ENCODE measurements at regions of chr11 and their contacts with region 1.

Region 1: DNA sequence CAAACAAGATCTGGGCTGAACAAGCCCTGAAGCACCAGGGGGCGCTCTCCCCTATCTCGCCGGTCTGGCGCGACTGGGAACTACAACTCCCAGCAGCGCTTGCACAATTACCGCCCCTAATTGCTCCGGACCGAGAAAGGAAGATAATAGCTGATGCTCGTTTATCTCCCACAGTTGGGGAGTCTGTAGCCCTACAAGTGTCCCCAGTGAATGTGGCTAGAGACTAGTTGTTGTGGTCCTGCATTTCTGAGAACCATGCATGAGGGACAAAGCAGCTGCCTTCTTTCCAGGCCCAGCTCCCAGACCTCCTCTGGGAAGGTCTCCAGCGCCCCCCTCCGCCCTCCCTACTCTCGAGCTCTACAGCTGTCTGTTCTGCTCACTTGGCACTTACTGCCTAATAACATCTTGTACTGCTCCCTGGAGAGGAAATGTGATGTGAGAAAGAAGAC is 34.4 kb downstream of the NRXN2 start:
- DNase-seq: peak; percentile 88 to 94 (median 91)
- ATAC-seq: peak; percentile 99
- H3K4me3 ChIP-seq: peak overlapping the region; percentile 35
- H3K27ac ChIP-seq: no peak overlapping the region
- H3K4me1 ChIP-seq: peaks cover 0 to 6% of the 10 kb centered on the region in 2 experiments; a peak in 2 of 5 replicates
- H3K27me3 ChIP-seq: peaks cover 21 to 62% of the 10 kb centered on the region in 2 experiments
- CTCF ChIP-seq: peak; percentile 94 to 97 (median 97)
- EP300 ChIP-seq: peak; percentile 39; the same call in 1 of the 2 replicates
- POLR2A ChIP-seq: no peak
- RAD21 ChIP-seq: peak; percentile 81 to 82

Region 2: DNA sequence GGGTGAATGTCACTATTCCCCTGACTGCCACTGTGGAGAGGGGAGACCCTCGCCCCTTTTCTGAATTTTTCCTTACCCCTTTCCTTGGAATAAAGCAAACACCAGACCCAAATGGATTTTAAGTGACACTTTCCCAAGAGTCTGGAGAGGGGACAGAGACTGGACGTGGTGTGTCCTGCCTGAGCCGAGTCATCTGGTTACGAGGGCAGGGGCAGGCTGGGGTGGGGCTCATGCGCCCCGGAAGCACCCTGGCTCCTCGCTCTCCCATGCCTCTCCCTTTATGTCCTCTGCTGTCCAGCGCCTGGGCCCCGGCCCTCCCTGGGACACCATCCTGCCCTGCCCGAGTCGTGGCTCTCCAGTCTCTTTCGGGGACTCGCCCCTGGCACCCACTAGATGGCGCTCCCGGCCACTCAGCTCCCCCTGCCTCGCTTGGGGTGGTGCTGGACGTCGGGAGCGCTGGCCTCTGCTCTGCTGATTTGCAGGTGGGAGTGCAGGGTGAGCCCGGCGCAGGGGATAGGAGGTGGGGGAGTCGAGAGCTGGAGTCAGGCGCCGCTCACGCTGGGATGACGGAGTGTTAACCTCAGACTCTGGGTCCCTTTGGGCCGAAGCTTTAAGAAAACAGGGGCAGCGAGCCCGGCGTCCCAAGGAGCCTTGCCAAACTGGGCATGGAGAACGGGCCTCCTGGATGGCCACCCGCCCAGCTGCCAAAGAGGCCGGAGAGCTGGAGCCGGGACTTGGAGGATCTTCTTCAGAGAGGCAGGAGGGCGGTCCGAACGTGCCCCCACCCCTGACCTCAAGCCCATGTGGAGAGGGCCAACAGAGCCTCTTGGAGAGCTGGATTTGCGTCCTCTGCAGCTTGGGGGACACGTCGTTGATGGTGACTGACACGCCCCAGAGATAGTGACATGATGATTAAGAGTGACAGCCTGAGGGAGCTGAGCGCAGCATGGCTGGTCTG is 239.7 kb before region 1 on chr11:
- CTCF ChIA-PET with region 1: no interaction called
- POLR2A ChIA-PET with region 1: no interaction called
- in situ Hi-C with region 1: no loop called
- intact Hi-C with region 1: loop called (anchors 1 kb)
- DNase-seq: peak; percentile 85 to 89 (median 88)
- ATAC-seq: peak; percentile 98
- H3K4me3 ChIP-seq: peak overlapping the region; percentile 8; the same call in 1 of the 2 replicates
- H3K27ac ChIP-seq: no peak overlapping the region
- H3K4me1 ChIP-seq: peaks cover 11 to 17% of the 10 kb centered on the region in 2 experiments
- H3K27me3 ChIP-seq: peaks cover 5 to 44% of the 10 kb centered on the region in 2 experiments; a peak in 4 of 5 replicates
- CTCF ChIP-seq: peak; percentile 87 to 93 (median 91)
- EP300 ChIP-seq: no peak
- POLR2A ChIP-seq: no peak
- RAD21 ChIP-seq: peak; percentile 62 to 83; a peak in 3 of 4 replicates

Region 3: DNA sequence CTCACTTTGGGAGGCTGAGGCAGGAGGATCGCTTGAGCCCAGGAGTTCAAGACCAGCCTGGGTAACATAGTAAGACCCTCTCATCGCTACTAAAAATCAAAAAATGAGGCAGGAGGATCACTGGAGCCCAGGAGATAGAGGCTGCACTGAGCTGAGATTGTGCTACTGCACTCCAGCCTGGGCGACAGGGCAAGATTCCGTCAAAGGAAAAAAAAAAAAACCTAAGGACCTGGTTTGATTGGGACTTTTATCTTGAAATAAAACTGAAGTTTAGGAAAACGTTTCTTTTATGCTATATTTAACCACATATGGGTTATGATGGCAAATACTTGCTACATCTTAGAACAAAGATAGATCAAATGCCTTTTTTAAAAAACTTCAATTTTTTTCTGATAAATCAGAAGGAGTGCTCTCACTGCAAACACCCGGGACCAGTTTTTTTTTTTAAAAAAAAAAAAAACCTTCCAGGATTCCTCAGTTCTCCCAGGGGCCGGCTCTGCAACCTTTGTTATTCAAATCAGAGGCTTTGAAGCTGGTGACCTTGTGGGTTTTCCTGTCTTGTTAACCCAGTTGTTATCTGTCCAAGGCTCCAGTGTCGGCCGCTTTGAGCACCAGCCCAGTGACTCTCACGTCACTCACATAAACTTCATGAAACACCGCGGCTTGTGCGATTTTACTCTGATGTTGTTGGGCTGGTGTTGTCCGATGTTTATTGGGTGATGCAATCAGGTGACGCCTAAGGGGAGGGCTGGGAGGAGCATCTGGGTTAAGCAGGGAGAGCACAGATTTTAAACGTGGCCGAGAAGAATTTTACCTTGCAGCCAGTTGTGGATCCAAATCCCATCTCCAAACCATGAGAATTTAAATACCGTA is 122.3 kb before region 1 on chr11:
- CTCF ChIA-PET with region 1: interaction called, 10 read pairs
- POLR2A ChIA-PET with region 1: interaction called, 3 read pairs
- in situ Hi-C with region 1: no loop called
- intact Hi-C with region 1: no loop called
- DNase-seq: peak; percentile 66 to 77 (median 68)
- ATAC-seq: peak; percentile 93
- H3K4me3 ChIP-seq: no peak overlapping the region
- H3K27ac ChIP-seq: no peak overlapping the region
- H3K4me1 ChIP-seq: peaks cover 2 to 40% of the 10 kb centered on the region in 2 experiments
- H3K27me3 ChIP-seq: peaks cover 9 to 46% of the 10 kb centered on the region in 2 experiments; a peak in 3 of 5 replicates
- CTCF ChIP-seq: no peak
- EP300 ChIP-seq: peak; percentile 28; the same call in 1 of the 2 replicates
- POLR2A ChIP-seq: no peak
- RAD21 ChIP-seq: 0 out of 4 replicates have a peak, but pooled peaks of 1 of the 2 experiments have one; percentile 7

Region 4: DNA sequence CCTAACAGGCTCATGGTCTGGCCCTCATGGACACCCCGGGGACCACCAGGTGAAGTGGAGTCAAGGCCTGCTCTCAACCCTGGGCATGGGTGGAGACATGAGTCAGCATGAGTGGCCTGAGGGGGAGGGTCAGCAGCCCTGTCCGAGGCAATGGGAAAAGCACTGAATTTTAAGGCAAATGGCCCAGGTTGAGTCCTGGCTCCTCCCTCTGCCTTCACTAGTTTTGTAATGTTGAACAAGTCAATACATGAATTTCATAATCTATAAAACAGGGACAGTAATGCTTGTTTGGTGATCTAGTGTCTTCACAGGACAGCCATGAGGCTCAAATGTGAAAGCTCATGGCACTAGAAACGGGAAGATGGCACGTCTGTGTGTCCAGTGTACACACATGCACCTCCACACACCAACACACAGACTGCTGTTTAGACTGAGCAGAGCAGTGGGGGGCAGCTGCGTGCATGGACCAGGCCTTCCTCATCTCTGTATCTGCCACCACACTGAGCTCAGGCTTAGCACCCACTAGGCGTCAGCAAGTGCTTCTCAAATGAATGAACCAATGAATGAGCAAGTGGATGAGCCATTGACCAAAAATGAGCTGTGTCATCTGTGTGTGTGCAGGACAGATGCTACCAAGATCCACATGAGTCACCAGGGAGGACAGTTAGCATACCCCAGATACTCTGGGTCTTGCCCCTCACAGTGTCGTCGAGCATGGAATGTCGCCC is 29.0 kb before region 1 on chr11:
- CTCF ChIA-PET with region 1: no interaction called
- POLR2A ChIA-PET with region 1: interaction called, 4 read pairs
- in situ Hi-C with region 1: no loop called
- intact Hi-C with region 1: loop called (anchors 1 kb)
- DNase-seq: peak; percentile 73 to 87 (median 79)
- ATAC-seq: peak; percentile 88
- H3K4me3 ChIP-seq: no peak overlapping the region
- H3K27ac ChIP-seq: peak overlapping the region; percentile 82
- H3K4me1 ChIP-seq: peaks cover 38 to 42% of the 10 kb centered on the region in 2 experiments
- H3K27me3 ChIP-seq: no peaks in the 10 kb centered on the region
- CTCF ChIP-seq: peak in 2 of 3 experiments; percentile 37 to 54; a peak in 3 of 6 replicates
- EP300 ChIP-seq: peak; percentile 79
- POLR2A ChIP-seq: peak; percentile 60; the same call in 1 of the 2 replicates
- RAD21 ChIP-seq: peak; percentile 20 to 61; a peak in 3 of 4 replicates

Region 5: DNA sequence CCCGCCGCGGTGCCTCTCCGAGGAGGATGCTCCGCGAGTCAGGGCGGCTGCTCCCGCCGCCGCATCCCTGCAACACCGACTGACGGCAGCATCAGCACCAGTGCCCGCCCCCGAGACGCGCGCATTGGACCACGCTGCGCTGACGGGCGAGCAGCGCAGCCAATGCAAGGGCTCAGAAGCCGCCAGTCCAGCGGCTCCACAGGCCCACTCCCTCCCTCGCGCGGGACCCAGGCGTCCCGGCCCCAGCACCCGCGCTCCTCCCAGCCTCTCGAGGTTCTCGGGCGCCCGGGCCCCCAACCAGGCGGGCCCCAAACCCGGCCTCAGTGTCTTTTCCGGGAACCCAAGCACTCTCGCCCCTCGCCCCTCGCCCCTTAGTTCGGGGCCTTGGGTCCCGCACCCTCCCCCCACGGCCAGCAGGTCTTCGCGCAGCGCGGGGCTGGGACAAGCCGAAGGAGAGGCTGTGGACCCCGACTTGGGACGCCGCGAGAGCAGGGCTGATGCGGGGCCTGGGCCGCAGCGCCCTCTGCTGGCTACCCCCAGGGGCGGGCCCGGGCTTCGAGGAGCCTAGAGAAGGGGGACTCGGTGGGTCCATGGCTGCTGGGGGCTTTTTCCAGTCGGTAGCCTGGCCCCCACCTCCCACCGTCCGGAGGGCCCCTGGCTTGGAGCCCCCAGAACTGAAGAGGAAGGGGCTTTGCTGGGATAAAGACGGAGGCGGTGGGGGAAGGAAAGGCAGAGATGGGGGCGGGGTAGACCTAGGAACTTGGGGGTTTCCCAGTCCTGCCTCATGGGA is 34.8 kb after region 1 on chr11 and contains the start of gene NRXN2:
- CTCF ChIA-PET with region 1: interaction called, 4 read pairs
- POLR2A ChIA-PET with region 1: interaction called, 3 read pairs
- in situ Hi-C with region 1: no loop called
- intact Hi-C with region 1: loop called (anchors 1 kb)
- DNase-seq: peak; percentile 90 to 95 (median 94)
- ATAC-seq: peak; percentile 99
- H3K4me3 ChIP-seq: peak within 1 kb of the TSS; percentile 68
- H3K27ac ChIP-seq: no peak within 1 kb of the TSS
- H3K4me1 ChIP-seq: peaks cover 0 to 25% of the 10 kb centered on the region in 2 experiments; a peak in 3 of 5 replicates
- H3K27me3 ChIP-seq: peaks cover 7 to 27% of the 10 kb centered on the region in 2 experiments; a peak in 4 of 5 replicates
- CTCF ChIP-seq: peak; percentile 85 to 89 (median 88)
- EP300 ChIP-seq: no peak
- POLR2A ChIP-seq: no peak
- RAD21 ChIP-seq: peak; percentile 83 to 86
- polyA plus RNA-seq, gene NRXN2: not detected

Measured in K562 (cell line).